ENCODE measurements at regions of chr10 and their contacts with region 1.

Region 1: GRCh38 chr10:69179743-69180524 is at the start of gene SUPV3L1:
- DNase-seq: peak; percentile 91
- H3K4me3 ChIP-seq: peak within 1 kb of the TSS; percentile 75 to 98 (median 88)
- H3K27ac ChIP-seq: peak within 1 kb of the TSS; percentile 99
- H3K4me1 ChIP-seq: peaks cover 7% of the 10 kb centered on the region
- H3K27me3 ChIP-seq: no peaks in the 10 kb centered on the region
- CTCF ChIP-seq: no peak
- total RNA-seq, gene SUPV3L1: 26.8 to 36.7 TPM

Region 2: DNA sequence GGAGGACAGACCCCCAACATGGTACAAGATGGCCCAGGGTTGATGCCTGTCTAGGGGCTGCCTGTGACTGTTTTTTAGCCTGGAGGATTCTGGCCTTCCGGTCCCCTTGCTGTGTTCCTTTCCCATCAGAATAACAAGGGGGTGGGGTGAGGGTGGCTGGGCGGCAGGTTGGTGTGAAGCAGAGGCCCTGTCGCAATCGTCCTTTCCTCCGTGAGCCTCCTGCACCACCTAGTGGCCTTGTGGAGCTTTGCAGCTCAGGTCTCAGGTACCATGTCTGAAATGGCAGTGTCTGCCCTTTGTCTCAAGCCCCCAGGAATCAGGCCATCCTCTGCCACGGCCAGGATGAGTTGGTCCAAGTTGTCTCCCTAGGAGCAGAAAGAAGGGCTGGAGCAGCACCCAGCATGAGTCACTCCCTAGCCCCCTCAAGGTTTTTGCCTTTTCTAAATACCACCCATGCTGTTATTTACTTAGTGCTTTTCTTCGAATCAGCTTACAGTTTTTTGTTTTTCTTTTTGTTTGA is 212.6 kb after region 1 on chr10:
- CTCF ChIA-PET with region 1: no interaction called
- dilution Hi-C with region 1: no loop called
- in situ Hi-C with region 1: no loop called
- intact Hi-C with region 1: loop called (anchors 5 kb)
- DNase-seq: peak; percentile 66
- H3K4me3 ChIP-seq: no peak overlapping the region
- H3K27ac ChIP-seq: no peak overlapping the region
- H3K4me1 ChIP-seq: peaks cover 6% of the 10 kb centered on the region
- H3K27me3 ChIP-seq: no peaks in the 10 kb centered on the region
- CTCF ChIP-seq: peak; percentile 92 to 99

Measured in mammary epithelial cell (primary cell).